Stomach (tissue), 19 donors: ENCODE measurements at regions of chr22 and their contacts with region 1.

Region 1: DNA sequence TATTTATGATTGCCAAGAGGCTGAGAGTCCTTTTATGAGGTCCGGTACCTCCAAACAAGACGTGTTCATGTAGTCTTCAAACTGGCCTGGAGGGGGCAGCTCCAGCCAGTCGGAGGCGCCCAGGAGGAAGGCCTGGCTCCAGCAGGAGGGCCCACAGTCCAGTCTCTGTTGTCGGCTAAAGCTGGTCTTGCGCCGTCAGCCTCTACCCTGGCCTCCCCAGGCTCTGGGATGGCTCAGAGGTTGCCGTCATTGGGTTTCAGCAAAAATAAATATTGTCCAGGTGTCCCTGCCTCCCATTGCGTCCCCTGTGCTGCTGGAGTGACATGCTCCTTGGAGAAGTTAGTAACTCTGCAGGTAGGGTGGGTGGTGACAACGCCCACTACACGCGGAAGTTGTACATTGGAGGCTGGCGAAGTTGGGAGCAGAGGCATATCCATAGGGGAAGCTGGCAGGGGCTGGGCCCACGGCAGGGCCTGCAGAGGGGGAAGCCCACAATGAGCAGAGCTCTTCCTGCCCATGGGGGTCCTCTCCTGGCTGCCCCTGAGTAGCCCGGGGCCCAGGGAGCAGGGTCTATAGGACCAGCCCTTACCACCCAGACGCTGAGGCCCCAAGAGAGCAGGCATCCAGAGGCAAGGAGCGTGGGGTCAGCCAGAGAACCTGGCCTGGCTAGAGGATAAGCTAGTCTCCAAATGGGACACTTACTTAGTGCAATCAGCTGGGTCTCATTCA is 1.1 kb upstream of the SLC25A1 start:
- DNase-seq: peak; percentile 80 to 94
- H3K4me3 ChIP-seq: peak overlapping the region; percentile 91 to 96 (median 94)
- H3K27ac ChIP-seq: peak overlapping the region; percentile 92 to 98 (median 94)
- H3K4me1 ChIP-seq: peaks cover 32 to 45% (median 41%) of the 10 kb centered on the region in 4 donors
- H3K27me3 ChIP-seq: no peaks in the 10 kb centered on the region
- CTCF ChIP-seq: peak in 5 of 7 experiments; percentile 41 to 70 (median 62)
- EP300 ChIP-seq: no peak
- POLR2A ChIP-seq: no peak

Region 2: DNA sequence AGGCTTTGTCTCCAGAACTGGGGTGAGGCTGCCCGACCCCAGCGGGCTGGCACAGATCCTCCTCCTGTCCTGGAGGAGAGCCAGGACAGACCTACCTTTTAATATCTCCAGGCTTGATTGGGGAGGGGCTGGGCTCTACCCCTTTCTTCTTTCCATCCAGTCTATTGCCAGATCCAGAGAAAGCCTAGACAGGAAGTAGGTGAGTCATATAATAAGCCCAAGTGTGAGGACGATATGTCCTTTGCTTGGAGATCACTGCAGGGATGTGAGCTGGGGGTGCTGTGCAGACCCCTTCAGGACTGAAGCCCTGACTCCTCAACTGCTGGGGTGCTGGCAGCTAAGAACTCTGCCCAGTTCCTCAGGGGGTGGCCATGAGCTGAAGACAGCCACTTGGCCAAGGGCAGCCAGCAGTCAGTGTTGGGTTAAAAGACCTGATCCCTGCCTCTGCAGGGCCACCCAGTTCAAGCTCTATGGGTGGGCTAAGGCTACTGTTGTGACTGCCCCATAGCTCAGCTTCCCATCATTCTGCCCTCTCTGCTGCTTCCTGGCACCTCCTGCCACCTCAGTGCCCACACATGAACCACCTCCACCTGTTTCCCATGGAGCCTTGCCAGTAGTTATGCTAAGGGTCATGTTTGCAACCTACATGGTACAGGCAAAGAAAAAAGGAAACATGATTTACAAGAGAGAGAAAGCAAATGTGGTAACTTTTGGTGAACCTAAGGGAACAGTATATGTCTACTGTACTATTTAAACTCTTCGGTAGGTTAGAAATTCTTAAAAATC is 276.1 kb after region 1 on chr22:
- intact Hi-C with region 1: loop called (anchors 10 kb)
- DNase-seq: no peak
- H3K4me3 ChIP-seq: no peak overlapping the region
- H3K27ac ChIP-seq: no peak overlapping the region
- H3K4me1 ChIP-seq: no peaks in the 10 kb centered on the region
- H3K27me3 ChIP-seq: no peaks in the 10 kb centered on the region
- CTCF ChIP-seq: no peak
- EP300 ChIP-seq: no peak
- POLR2A ChIP-seq: no peak